ENCODE measurements at regions of chr2 and their contacts with region 1.

Region 1: GRCh38 chr2:153519257-153519875 is 40.8 kb upstream of the RPRM start:
- DNase-seq: peak; percentile 53
- H3K4me3 ChIP-seq: no peak overlapping the region
- H3K27ac ChIP-seq: no peak overlapping the region
- H3K4me1 ChIP-seq: no peaks in the 10 kb centered on the region
- CTCF ChIP-seq: peak; percentile 95

Region 2: GRCh38 chr2:152036611-152037469 is 1482.5 kb before region 1 on chr2:
- CTCF ChIA-PET with region 1: no interaction called
- POLR2A ChIA-PET with region 1: no interaction called
- intact Hi-C with region 1: loop called (anchors 10 kb)
- DNase-seq: peak; percentile 67
- H3K4me3 ChIP-seq: no peak overlapping the region
- H3K27ac ChIP-seq: no peak overlapping the region
- H3K4me1 ChIP-seq: no peaks in the 10 kb centered on the region
- CTCF ChIP-seq: peak; percentile 89

Region 3: GRCh38 chr2:152189622-152190495 is 1329.5 kb before region 1 on chr2:
- CTCF ChIA-PET with region 1: no interaction called
- POLR2A ChIA-PET with region 1: no interaction called
- intact Hi-C with region 1: loop called (anchors 10 kb)
- DNase-seq: peak; percentile 29
- H3K4me3 ChIP-seq: no peak overlapping the region
- H3K27ac ChIP-seq: no peak overlapping the region
- H3K4me1 ChIP-seq: no peaks in the 10 kb centered on the region
- CTCF ChIP-seq: peak; percentile 74

Region 4: GRCh38 chr2:152925547-152926327 is 593.6 kb before region 1 on chr2:
- CTCF ChIA-PET with region 1: no interaction called
- POLR2A ChIA-PET with region 1: no interaction called
- intact Hi-C with region 1: loop called (anchors 10 kb)
- DNase-seq: peak; percentile 56
- H3K4me3 ChIP-seq: no peak overlapping the region
- H3K27ac ChIP-seq: no peak overlapping the region
- H3K4me1 ChIP-seq: no peaks in the 10 kb centered on the region
- CTCF ChIP-seq: peak; percentile 94

Region 5: GRCh38 chr2:153163058-153163457 is 356.3 kb before region 1 on chr2:
- CTCF ChIA-PET with region 1: no interaction called
- POLR2A ChIA-PET with region 1: no interaction called
- intact Hi-C with region 1: loop called (anchors 5 kb)
- DNase-seq: peak; percentile 15
- H3K4me3 ChIP-seq: no peak overlapping the region
- H3K27ac ChIP-seq: no peak overlapping the region
- H3K4me1 ChIP-seq: no peaks in the 10 kb centered on the region
- CTCF ChIP-seq: peak; percentile 69